Dorsolateral prefrontal cortex (tissue), 120 donors: ENCODE measurements at regions of chr9 and their contacts with region 1.

Region 1: GRCh38 chr9:133133681-133134418 is 12.8 kb upstream of the RALGDS start:
- DNase-seq: peak in 9 of 10 donors; percentile 61 to 93 (median 85)
- H3K4me3 ChIP-seq: peak overlapping the region in 10 of 59 donors; percentile 1 to 35 (median 12)
- H3K27ac ChIP-seq: peak overlapping the region; percentile 93 to 100 (median 100)
- H3K27me3 ChIP-seq: no peaks in the 10 kb centered on the region
- CTCF ChIP-seq: peak in 1 of 56 donors; percentile 14

Region 2: DNA sequence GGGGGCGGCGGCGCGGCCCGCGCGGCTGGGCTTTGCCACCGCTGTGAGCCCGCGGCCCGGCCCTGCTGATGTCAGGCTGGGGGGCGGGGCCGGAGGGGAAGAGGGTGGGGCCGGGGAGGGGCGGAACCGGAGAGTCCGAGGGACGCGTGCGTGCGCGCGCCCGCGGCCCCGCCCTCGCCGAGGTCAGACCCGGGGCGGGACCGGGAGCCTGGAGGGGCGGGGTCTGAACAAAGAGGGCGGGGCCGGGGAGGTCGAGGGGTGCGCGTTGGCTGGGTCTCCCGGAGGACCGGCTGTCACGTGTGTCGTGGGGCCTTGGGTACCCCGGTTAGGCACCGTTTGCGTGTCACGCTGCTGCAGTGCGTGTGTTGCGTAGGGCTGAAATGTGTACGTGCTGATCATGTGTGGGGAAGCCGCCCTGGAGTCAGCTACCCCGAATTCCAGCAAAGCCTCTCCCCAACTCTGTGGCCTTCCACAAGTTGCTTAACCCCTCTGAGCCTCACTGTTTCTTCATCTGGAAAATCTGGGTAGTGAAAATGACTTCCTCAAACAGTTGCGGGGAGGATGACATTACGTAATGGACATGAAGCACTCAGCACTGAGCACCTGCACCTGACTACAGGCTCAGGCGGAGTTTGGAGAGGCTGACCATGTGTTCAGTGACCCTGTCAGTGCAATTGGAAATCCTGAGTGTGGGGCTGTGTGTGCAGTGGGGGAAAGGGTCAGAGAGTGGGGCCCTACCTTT is 12.5 kb before region 1 on chr9 and contains the start of gene RALGDS:
- intact Hi-C with region 1: loop called (anchors 1 to 2 kb)
- DNase-seq: peak; percentile 87 to 95 (median 90)
- H3K4me3 ChIP-seq: peak within 1 kb of the TSS; percentile 59 to 98 (median 89)
- H3K27ac ChIP-seq: peak within 1 kb of the TSS; percentile 75 to 100 (median 98)
- H3K27me3 ChIP-seq: no peaks in the 10 kb centered on the region
- CTCF ChIP-seq: peak in 2 of 56 donors; percentile 9 to 11
- total RNA-seq, gene RALGDS: 72.2 to 415 (median 142) TPM

Region 3: DNA sequence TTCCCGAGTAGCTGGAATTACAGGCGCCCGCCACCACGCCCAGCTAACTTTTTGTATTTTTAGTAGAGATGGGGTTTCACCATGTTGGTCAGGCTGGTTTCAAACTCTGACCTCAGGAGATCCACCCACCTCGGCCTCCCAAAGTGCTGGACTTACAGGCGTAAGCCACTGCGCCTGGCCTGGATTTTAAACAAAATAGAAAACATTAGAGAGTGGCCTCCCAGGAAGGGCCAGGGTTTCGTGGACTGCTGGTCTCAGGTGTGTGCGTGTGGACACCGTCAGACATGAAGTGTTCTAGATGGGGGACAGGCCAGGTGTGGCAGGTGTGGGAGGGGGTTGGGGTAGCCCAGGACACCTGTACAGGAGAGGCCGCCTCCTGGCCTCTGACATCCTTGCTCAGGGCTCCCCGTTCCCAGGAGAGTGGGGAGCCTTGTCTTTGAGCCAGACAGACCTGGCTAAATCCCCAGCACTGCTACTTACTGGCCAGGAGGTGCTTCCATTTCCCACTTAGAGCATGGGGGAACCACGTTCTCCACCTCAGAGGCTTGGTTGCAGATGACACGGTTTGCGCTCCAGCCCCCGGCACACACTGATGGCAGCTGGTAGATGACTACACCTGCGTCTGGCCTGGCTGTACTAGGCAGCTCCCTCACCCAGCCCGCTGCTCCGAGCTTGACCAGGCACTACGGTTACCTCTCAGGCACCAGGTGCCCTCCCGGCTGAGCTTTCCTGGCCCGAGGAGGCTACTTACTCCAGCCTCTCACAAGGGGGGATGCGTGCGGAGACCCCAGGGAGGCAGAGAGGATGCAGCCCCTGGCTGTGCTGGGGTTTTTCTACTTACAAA is 37.1 kb after region 1 on chr9:
- intact Hi-C with region 1: no loop called
- DNase-seq: no peak
- H3K4me3 ChIP-seq: no peak overlapping the region
- H3K27ac ChIP-seq: no peak overlapping the region
- H3K27me3 ChIP-seq: peaks cover 0 to 3% (median 0%) of the 10 kb centered on the region in 45 donors
- CTCF ChIP-seq: no peak